ENCODE measurements at regions of chr2 and their contacts with region 1.

Region 1: DNA sequence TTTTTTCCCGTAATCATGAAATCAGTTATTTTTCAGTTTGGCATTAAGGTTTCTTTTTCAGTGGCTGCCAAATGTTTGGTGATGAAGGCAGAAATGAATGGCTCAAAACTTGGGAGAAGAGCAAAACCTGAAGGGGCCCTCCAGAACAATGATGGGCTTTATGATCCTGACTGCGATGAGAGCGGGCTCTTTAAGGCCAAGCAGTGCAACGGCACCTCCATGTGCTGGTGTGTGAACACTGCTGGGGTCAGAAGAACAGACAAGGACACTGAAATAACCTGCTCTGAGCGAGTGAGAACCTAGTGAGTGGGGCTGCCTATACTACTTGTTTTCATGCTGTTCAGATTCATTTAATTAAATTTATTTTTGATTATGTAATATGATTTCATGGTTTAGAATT is 29.2 kb upstream of the MSH2 start:
- DNase-seq: no peak
- H3K4me3 ChIP-seq: no peak overlapping the region
- H3K27ac ChIP-seq: no peak overlapping the region
- H3K4me1 ChIP-seq: peaks cover 0 to 3% (median 0%) of the 10 kb centered on the region in 4 experiments; a peak in 1 of 7 replicates
- H3K27me3 ChIP-seq: peaks cover 0 to 6% (median 2%) of the 10 kb centered on the region in 4 experiments; a peak in 2 of 7 replicates
- CTCF ChIP-seq: peak; percentile 62 to 70 (median 63)
- EP300 ChIP-seq: no peak
- POLR2A ChIP-seq: no peak
- RAD21 ChIP-seq: peak; percentile 84 to 88

Region 2: DNA sequence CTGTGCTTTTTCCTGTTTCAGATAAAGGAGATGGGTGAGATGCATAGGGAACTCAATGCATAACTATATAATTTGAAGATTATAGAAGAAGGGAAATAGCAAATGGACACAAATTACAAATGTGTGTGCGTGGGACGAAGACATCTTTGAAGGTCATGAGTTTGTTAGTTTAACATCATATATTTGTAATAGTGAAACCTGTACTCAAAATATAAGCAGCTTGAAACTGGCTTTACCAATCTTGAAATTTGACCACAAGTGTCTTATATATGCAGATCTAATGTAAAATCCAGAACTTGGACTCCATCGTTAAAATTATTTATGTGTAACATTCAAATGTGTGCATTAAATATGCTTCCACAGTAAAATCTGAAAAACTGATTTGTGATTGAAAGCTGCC is 12.8 kb after region 1 on chr2:
- CTCF ChIA-PET with region 1: interaction called, 12 read pairs
- POLR2A ChIA-PET with region 1: interaction called, 9 read pairs
- DNase-seq: no peak
- H3K4me3 ChIP-seq: no peak overlapping the region
- H3K27ac ChIP-seq: no peak overlapping the region
- H3K4me1 ChIP-seq: no peaks in the 10 kb centered on the region
- H3K27me3 ChIP-seq: no peaks in the 10 kb centered on the region
- CTCF ChIP-seq: no peak
- EP300 ChIP-seq: no peak
- POLR2A ChIP-seq: no peak
- RAD21 ChIP-seq: no peak

Measured in H1 (cell line).